AG04450 (cell line): ENCODE measurements at regions of chr11 and their contacts with region 1.

Region 1: GRCh38 chr11:10808553-10809372 is at the start of gene EIF4G2:
- DNase-seq: peak; percentile 98
- H3K4me3 ChIP-seq: peak within 1 kb of the TSS; percentile 93
- H3K27ac ChIP-seq: peak within 1 kb of the TSS; percentile 98
- H3K27me3 ChIP-seq: no peaks in the 10 kb centered on the region
- CTCF ChIP-seq: no peak
- polyA plus RNA-seq, gene EIF4G2: 1,244 and 1,432 TPM in 2 replicates

Region 2: GRCh38 chr11:10784232-10785145 is 24.3 kb before region 1 on chr11:
- CTCF ChIA-PET with region 1: interaction called, 6 read pairs
- POLR2A ChIA-PET with region 1: interaction called, 13 read pairs
- DNase-seq: no peak
- H3K4me3 ChIP-seq: no peak overlapping the region
- H3K27ac ChIP-seq: no peak overlapping the region
- H3K27me3 ChIP-seq: no peaks in the 10 kb centered on the region
- CTCF ChIP-seq: no peak

Region 3: DNA sequence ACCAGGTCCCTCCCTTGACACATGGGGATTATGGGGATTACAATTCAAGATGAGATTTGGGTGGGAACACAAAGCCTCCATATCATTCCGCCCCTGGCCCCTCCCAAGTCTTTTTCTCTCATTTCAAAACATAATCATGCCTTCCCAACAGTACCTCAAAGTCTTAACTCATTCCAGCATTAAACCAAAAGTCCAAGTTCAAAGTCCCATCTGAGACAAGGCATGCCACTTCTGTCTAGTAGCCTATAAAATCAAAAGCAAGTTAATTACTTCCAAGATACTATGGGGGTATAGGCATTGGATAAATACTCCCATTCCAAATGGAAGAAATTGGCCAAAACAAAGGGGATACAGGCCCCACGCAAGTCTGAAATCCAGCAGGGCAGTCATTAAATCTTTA is 19.6 kb after region 1 on chr11:
- CTCF ChIA-PET with region 1: interaction called, 3 read pairs
- POLR2A ChIA-PET with region 1: interaction called, 14 read pairs
- DNase-seq: no peak
- H3K4me3 ChIP-seq: no peak overlapping the region
- H3K27ac ChIP-seq: no peak overlapping the region
- H3K27me3 ChIP-seq: no peaks in the 10 kb centered on the region
- CTCF ChIP-seq: no peak

Region 4: DNA sequence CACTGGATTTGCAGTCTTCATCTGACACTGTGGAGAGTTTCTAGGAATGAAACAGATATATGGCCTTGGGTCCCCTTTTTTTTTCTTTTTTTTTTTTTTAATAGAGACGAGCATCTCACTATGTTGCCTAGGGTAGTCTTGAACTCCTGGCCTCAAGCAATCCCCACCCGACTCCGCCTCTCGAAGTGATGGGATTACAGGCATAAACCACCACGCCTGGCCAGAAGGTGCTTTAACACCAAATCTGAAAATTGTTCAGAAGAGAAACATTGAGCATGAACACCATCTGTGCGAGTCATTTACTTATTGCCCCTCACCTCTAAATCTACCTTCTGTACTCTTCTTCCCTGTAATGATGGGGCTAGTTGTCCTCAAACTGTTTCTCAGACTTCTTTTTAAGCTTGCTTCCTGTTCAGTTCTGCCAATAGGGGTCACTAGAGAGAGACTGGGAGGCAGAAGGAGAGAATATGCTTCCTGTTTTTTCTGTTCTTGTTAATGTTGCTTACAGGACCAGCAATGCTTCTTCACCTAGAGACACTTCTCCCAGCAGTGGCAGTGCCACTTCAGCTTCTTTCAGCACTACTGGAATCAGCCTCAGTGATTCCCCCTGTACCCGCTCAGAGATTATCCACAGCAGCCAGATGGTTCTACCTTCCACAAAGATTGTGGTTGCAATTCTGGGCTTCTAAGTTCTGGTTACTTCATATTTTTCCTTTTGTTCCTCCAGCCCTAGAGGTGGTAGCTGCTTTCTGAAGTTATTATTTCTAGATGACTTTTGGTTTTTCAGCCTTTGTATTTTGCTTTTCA is 69.8 kb after region 1 on chr11:
- CTCF ChIA-PET with region 1: interaction called, 7 read pairs
- POLR2A ChIA-PET with region 1: interaction called, 11 read pairs
- DNase-seq: peak; percentile 23
- H3K4me3 ChIP-seq: no peak overlapping the region
- H3K27ac ChIP-seq: no peak overlapping the region
- H3K27me3 ChIP-seq: no peaks in the 10 kb centered on the region
- CTCF ChIP-seq: peak; percentile 85

Region 5: DNA sequence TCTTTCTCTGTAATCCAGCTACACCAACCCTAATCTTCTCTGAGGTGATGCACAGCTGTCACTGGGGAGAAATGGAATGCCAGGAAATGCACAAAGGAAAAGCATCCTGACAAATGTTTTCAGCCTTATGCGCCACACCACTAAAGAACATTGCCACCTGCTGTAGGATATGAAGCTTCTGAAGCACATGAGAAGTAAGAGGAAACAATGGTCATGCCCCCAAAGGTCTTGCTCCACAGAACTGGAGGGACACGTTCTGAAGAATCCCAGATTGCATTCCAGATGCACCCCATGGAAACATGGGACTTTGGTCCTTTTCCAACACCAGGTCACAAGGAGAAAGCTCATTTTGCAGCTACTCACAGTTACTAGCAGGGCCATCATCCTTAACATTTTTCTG is 97.8 kb after region 1 on chr11:
- CTCF ChIA-PET with region 1: no interaction called
- POLR2A ChIA-PET with region 1: interaction called, 101 read pairs
- DNase-seq: no peak
- H3K4me3 ChIP-seq: no peak overlapping the region
- H3K27ac ChIP-seq: no peak overlapping the region
- H3K27me3 ChIP-seq: no peaks in the 10 kb centered on the region
- CTCF ChIP-seq: 0 out of 2 replicates have a peak, but pooled peaks have one; percentile 11

Region 6: GRCh38 chr11:10933455-10934292 is 124.9 kb after region 1 on chr11:
- CTCF ChIA-PET with region 1: interaction called, 12 read pairs
- POLR2A ChIA-PET with region 1: interaction called, 64 read pairs
- DNase-seq: peak; percentile 81
- H3K4me3 ChIP-seq: peak overlapping the region; percentile 62
- H3K27ac ChIP-seq: no peak overlapping the region
- H3K27me3 ChIP-seq: no peaks in the 10 kb centered on the region
- CTCF ChIP-seq: peak; percentile 96